CD4-positive, alpha-beta memory T cell (primary cell): ENCODE measurements at regions of chr12 and their contacts with region 1.

Region 1: DNA sequence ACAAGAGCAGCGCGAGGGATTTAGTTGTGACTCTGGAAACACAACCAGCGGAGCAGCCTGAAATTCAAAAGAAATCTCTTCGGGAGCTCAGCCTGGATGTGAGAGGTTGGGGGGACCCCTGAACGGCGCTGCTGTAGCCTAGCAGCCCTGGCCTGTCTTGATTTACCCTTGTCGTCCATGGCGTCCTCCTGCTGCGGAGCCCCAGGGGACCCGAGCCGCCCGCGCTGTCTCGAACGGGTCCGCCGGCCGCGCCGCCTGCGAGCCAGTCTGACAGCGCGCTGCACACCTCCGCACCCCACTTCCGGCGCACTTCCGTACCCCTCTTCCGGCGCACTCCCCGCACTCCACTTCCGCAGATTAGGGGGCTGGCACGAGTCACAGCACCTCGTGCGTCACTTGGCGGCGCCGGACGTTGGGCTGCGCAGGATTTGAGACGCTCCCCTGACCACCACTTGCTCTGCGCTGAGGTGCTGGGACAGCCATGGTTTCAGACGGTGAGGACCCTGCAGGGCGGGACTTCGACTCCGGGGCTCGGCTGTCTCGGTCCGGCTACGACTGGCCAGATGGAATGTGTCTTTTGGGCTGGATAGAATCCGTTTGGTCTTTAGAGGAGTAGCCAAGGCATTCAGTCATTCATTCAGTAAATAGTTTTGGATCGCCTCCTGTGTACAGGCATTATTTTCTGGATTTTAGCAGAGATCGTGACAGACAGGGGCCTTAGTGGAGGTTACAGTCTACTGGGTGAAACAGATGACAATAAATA is at the starts of genes EIF2B1 and GTF2H3:
- DNase-seq: peak; percentile 94 to 97 (median 94)
- H3K4me3 ChIP-seq: peak within 1 kb of the TSS; percentile 83 to 92
- H3K4me3 Mint-ChIP-seq: peak within 1 kb of the TSS; percentile 92 to 98 (median 96)
- H3K27ac ChIP-seq: peak within 1 kb of the TSS; percentile 81
- H3K27ac Mint-ChIP-seq: peak within 1 kb of the TSS; percentile 92 to 99 (median 97)
- H3K4me1 ChIP-seq: peaks cover 23% of the 10 kb centered on the region
- H3K4me1 Mint-ChIP-seq: peaks cover 21 to 38% (median 31%) of the 10 kb centered on the region in 4 donors
- H3K27me3 ChIP-seq: no peaks in the 10 kb centered on the region
- H3K27me3 Mint-ChIP-seq: no peaks in the 10 kb centered on the region
- total RNA-seq, gene EIF2B1: 50.3 to 51.2 TPM
- total RNA-seq, gene GTF2H3: 18.9 to 24.6 TPM

Region 2: DNA sequence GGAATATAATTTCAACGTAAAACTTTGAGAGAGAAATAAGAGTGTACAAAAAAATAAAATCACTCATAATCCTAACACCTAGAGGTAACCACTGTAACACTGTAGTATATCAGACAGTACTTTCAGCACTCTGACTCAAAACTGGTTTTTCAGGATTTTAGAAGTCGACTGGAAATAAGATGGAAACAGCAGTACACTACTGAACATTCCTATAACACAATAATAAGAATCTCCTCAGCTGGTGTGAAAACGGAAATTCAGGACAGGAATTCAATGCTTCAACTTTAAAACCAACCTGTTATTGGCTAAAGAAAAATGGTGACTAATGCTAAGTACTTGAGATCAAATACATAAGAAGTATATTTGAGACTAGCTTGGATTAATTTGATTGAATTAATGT is 470.3 kb before region 1 on chr12:
- CTCF ChIA-PET with region 1: no interaction called
- POLR2A ChIA-PET with region 1: no interaction called
- intact Hi-C with region 1: no loop called
- DNase-seq: no peak
- H3K4me3 ChIP-seq: no peak overlapping the region
- H3K4me3 Mint-ChIP-seq: no peak overlapping the region
- H3K27ac ChIP-seq: no peak overlapping the region
- H3K27ac Mint-ChIP-seq: peak overlapping the region in 1 of 7 donors; percentile 8
- H3K4me1 ChIP-seq: no peaks in the 10 kb centered on the region
- H3K4me1 Mint-ChIP-seq: peaks cover 0 to 4% (median 3%) of the 10 kb centered on the region in 4 donors
- H3K27me3 ChIP-seq: no peaks in the 10 kb centered on the region
- H3K27me3 Mint-ChIP-seq: no peaks in the 10 kb centered on the region

Region 3: DNA sequence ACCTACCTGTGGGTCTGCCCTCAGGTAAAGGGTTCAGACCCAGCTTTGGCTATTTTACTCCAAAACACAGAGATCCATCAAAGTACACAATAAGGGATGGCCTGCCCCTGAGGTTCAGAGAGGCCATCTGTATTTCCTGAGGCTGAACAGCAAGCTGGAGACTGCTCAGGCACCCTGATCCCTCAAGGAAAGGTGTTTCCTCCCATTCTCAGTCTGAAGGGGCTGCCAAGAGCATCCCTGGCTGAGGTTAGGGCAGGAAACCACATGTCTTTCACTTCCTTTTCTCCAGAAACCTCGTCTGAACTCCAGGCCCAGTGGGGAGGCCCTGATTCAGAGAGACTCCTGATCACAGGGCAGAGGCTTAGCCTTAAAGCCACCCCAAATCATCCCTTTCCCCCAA is 101.5 kb before region 1 on chr12:
- CTCF ChIA-PET with region 1: no interaction called
- POLR2A ChIA-PET with region 1: no interaction called
- intact Hi-C with region 1: no loop called
- DNase-seq: no peak
- H3K4me3 ChIP-seq: no peak overlapping the region
- H3K4me3 Mint-ChIP-seq: peak overlapping the region; percentile 84 to 91 (median 87)
- H3K27ac ChIP-seq: no peak overlapping the region
- H3K27ac Mint-ChIP-seq: peak overlapping the region in 2 of 7 donors; percentile 74 to 88
- H3K4me1 ChIP-seq: peaks cover 20% of the 10 kb centered on the region
- H3K4me1 Mint-ChIP-seq: peaks cover 11 to 31% (median 17%) of the 10 kb centered on the region in 4 donors
- H3K27me3 ChIP-seq: no peaks in the 10 kb centered on the region
- H3K27me3 Mint-ChIP-seq: no peaks in the 10 kb centered on the region

Region 4: GRCh38 chr12:123601602-123602489 is 31.7 kb before region 1 on chr12 and contains the start of gene DDX55:
- CTCF ChIA-PET with region 1: no interaction called
- POLR2A ChIA-PET with region 1: interaction called, 13 read pairs
- intact Hi-C with region 1: loop called (anchors 1 kb)
- DNase-seq: peak; percentile 84 to 87 (median 86)
- H3K4me3 ChIP-seq: peak within 1 kb of the TSS; percentile 97 to 99
- H3K4me3 Mint-ChIP-seq: peak within 1 kb of the TSS; percentile 90 to 99 (median 96)
- H3K27ac ChIP-seq: peak within 1 kb of the TSS; percentile 92
- H3K27ac Mint-ChIP-seq: peak within 1 kb of the TSS; percentile 91 to 96 (median 95)
- H3K4me1 ChIP-seq: peaks cover 27% of the 10 kb centered on the region
- H3K4me1 Mint-ChIP-seq: peaks cover 18 to 42% (median 29%) of the 10 kb centered on the region in 4 donors
- H3K27me3 ChIP-seq: no peaks in the 10 kb centered on the region
- H3K27me3 Mint-ChIP-seq: no peaks in the 10 kb centered on the region
- total RNA-seq, gene DDX55: 50.5 to 58.7 TPM

Region 5: DNA sequence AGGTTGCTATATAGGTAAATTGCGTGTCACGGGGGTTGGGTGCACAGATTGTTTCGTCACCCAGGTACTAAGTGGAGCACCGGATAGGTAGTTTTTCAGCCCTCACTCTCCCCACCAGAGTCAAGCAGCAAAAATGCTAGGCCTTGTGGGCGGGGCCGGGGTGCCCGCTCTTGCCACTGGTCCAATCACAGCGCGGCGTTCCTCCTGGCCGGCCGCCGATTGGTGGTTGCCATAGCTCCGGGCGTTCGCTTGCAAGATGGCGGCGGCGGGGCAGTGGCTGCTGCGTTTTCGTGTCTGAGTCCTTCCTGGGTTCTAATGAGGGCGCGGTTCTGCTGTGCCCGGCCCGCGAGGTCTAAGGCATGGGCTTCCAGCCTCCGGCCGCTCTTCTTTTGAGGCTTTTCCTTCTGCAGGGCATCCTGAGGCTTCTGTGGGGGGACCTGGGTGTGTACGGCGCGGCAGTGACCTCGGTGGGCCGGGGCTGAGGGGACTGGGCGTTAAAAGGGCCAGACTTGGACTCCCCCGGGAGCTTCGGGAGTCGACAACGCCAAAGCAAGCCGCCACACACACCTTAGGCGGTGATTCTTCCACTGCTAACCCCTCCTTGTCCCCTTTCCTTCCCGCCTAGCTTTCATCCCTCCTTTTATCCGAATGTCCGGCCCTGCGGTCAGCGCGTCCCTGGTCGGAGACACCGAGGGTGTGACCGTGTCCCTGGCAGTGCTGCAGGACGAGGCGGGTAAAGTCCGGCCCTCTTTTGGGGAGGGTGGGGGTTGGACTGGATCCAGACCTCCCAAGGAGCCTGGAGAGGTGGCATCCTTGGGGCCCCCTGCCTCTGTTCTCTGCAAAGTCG is 37.5 kb after region 1 on chr12 and contains the start of gene TCTN2:
- CTCF ChIA-PET with region 1: no interaction called
- POLR2A ChIA-PET with region 1: no interaction called
- intact Hi-C with region 1: loop called (anchors 5 kb)
- DNase-seq: peak; percentile 90 to 95 (median 92)
- H3K4me3 ChIP-seq: peak within 1 kb of the TSS; percentile 69 to 92
- H3K4me3 Mint-ChIP-seq: peak within 1 kb of the TSS; percentile 84 to 93 (median 90)
- H3K27ac ChIP-seq: peak within 1 kb of the TSS; percentile 45
- H3K27ac Mint-ChIP-seq: peak within 1 kb of the TSS; percentile 70 to 87 (median 82)
- H3K4me1 ChIP-seq: peaks cover 12% of the 10 kb centered on the region
- H3K4me1 Mint-ChIP-seq: peaks cover 11 to 18% (median 13%) of the 10 kb centered on the region in 4 donors
- H3K27me3 ChIP-seq: no peaks in the 10 kb centered on the region
- H3K27me3 Mint-ChIP-seq: no peaks in the 10 kb centered on the region
- total RNA-seq, gene TCTN2: 8.1 to 10.0 TPM

Region 6: GRCh38 chr12:123713398-123713797 is 79.8 kb after region 1 on chr12:
- CTCF ChIA-PET with region 1: no interaction called
- POLR2A ChIA-PET with region 1: no interaction called
- intact Hi-C with region 1: loop called (anchors 1 kb)
- DNase-seq: peak in 2 of 5 donors; percentile 1 to 8
- H3K4me3 ChIP-seq: peak overlapping the region; percentile 27 to 85
- H3K4me3 Mint-ChIP-seq: peak overlapping the region; percentile 84 to 97 (median 90)
- H3K27ac ChIP-seq: peak overlapping the region; percentile 60
- H3K27ac Mint-ChIP-seq: peak overlapping the region; percentile 84 to 93 (median 90)
- H3K4me1 ChIP-seq: peaks cover 34% of the 10 kb centered on the region
- H3K4me1 Mint-ChIP-seq: peaks cover 27 to 40% (median 35%) of the 10 kb centered on the region in 4 donors
- H3K27me3 ChIP-seq: no peaks in the 10 kb centered on the region
- H3K27me3 Mint-ChIP-seq: no peaks in the 10 kb centered on the region